Naive thymus-derived CD4-positive, alpha-beta T cell (primary cell): ENCODE measurements at regions of chr20 and their contacts with region 1.

Region 1: GRCh38 chr20:37527638-37528441 is at the start of gene BLCAP:
- DNase-seq: peak; percentile 89 to 98 (median 96)
- ATAC-seq: peak; percentile 96
- H3K4me3 ChIP-seq: peak within 1 kb of the TSS; percentile 86
- H3K4me3 Mint-ChIP-seq: peak within 1 kb of the TSS; percentile 81 to 95 (median 90)
- H3K27ac ChIP-seq: peak within 1 kb of the TSS; percentile 99
- H3K27ac Mint-ChIP-seq: peak within 1 kb of the TSS; percentile 98 to 100 (median 99)
- H3K4me1 ChIP-seq: peaks cover 30 to 35% of the 10 kb centered on the region in 2 donors
- H3K4me1 Mint-ChIP-seq: peaks cover 41 to 52% (median 46%) of the 10 kb centered on the region in 7 donors
- H3K27me3 ChIP-seq: no peaks in the 10 kb centered on the region
- H3K27me3 Mint-ChIP-seq: peaks cover 0 to 2% (median 0%) of the 10 kb centered on the region in 5 donors
- total RNA-seq, gene BLCAP: 42.1 to 94.7 (median 73.4) TPM

Region 2: GRCh38 chr20:37142708-37143107 is 385.1 kb before region 1 on chr20:
- CTCF ChIA-PET with region 1: no interaction called
- POLR2A ChIA-PET with region 1: no interaction called
- intact Hi-C with region 1: no loop called
- DNase-seq: no peak
- ATAC-seq: no peak
- H3K4me3 ChIP-seq: no peak overlapping the region
- H3K4me3 Mint-ChIP-seq: no peak overlapping the region
- H3K27ac ChIP-seq: no peak overlapping the region
- H3K27ac Mint-ChIP-seq: no peak overlapping the region
- H3K4me1 ChIP-seq: no peaks in the 10 kb centered on the region
- H3K4me1 Mint-ChIP-seq: no peaks in the 10 kb centered on the region
- H3K27me3 ChIP-seq: no peaks in the 10 kb centered on the region
- H3K27me3 Mint-ChIP-seq: peaks cover 0 to 5% (median 0%) of the 10 kb centered on the region in 5 donors

Region 3: GRCh38 chr20:37192137-37192854 is 335.5 kb before region 1 on chr20:
- CTCF ChIA-PET with region 1: interaction called, 42 read pairs
- POLR2A ChIA-PET with region 1: interaction called, 8 read pairs
- intact Hi-C with region 1: loop called in 1 of 2 experiments (anchors 2 kb)
- DNase-seq: peak; percentile 31 to 71 (median 60)
- ATAC-seq: peak; percentile 89
- H3K4me3 ChIP-seq: no peak overlapping the region
- H3K4me3 Mint-ChIP-seq: peak overlapping the region in 3 of 10 donors; percentile 7 to 44 (median 13)
- H3K27ac ChIP-seq: no peak overlapping the region
- H3K27ac Mint-ChIP-seq: peak overlapping the region in 8 of 9 donors; percentile 36 to 94 (median 66)
- H3K4me1 ChIP-seq: peaks cover 36 to 46% of the 10 kb centered on the region in 2 donors
- H3K4me1 Mint-ChIP-seq: peaks cover 64 to 84% (median 80%) of the 10 kb centered on the region in 7 donors
- H3K27me3 ChIP-seq: no peaks in the 10 kb centered on the region
- H3K27me3 Mint-ChIP-seq: no peaks in the 10 kb centered on the region

Region 4: DNA sequence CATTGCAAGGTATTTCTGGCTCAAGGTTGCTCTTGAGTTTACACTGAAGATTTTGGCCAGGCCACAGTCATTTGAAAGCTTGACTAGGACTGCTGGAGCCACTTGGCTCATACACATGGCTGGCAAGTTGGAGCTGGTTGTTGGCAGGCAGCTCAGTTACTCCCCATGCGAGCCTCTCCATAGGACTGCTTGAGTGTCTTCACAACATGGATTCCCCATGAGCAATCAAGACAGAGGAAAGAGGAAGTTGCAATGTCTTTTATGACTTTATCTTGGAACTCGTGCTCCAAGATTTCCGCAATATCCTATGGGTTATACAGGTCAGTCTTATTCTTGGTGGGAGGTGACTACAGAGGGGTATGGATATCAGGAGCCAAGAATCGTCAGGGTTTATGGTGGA is 239.7 kb before region 1 on chr20:
- CTCF ChIA-PET with region 1: interaction called, 3 read pairs
- POLR2A ChIA-PET with region 1: interaction called, 11 read pairs
- intact Hi-C with region 1: loop called (anchors 1 kb)
- DNase-seq: no peak
- ATAC-seq: no peak
- H3K4me3 ChIP-seq: no peak overlapping the region
- H3K4me3 Mint-ChIP-seq: peak overlapping the region; percentile 8 to 90 (median 64)
- H3K27ac ChIP-seq: no peak overlapping the region
- H3K27ac Mint-ChIP-seq: peak overlapping the region in 3 of 9 donors; percentile 10 to 96 (median 87)
- H3K4me1 ChIP-seq: peaks cover 10 to 13% of the 10 kb centered on the region in 2 donors
- H3K4me1 Mint-ChIP-seq: peaks cover 15 to 30% (median 24%) of the 10 kb centered on the region in 7 donors
- H3K27me3 ChIP-seq: no peaks in the 10 kb centered on the region
- H3K27me3 Mint-ChIP-seq: peaks cover 0 to 10% (median 6%) of the 10 kb centered on the region in 5 donors

Region 5: GRCh38 chr20:37294262-37294981 is 233.4 kb before region 1 on chr20:
- CTCF ChIA-PET with region 1: interaction called, 3 read pairs
- POLR2A ChIA-PET with region 1: interaction called, 11 read pairs
- intact Hi-C with region 1: loop called (anchors 1 kb)
- DNase-seq: no peak
- ATAC-seq: peak; percentile 52
- H3K4me3 ChIP-seq: no peak overlapping the region
- H3K4me3 Mint-ChIP-seq: peak overlapping the region in 1 of 10 donors; percentile 3
- H3K27ac ChIP-seq: no peak overlapping the region
- H3K27ac Mint-ChIP-seq: peak overlapping the region in 1 of 9 donors; percentile 39
- H3K4me1 ChIP-seq: peaks cover 13 to 14% of the 10 kb centered on the region in 2 donors
- H3K4me1 Mint-ChIP-seq: peaks cover 34 to 69% (median 62%) of the 10 kb centered on the region in 7 donors
- H3K27me3 ChIP-seq: no peaks in the 10 kb centered on the region
- H3K27me3 Mint-ChIP-seq: no peaks in the 10 kb centered on the region

Region 6: GRCh38 chr20:37384683-37385174 is 143.1 kb before region 1 on chr20:
- CTCF ChIA-PET with region 1: interaction called, 4 read pairs
- POLR2A ChIA-PET with region 1: interaction called, 3 read pairs
- intact Hi-C with region 1: loop called (anchors 2 to 5 kb)
- DNase-seq: peak; percentile 55 to 89 (median 77)
- ATAC-seq: peak; percentile 96
- H3K4me3 ChIP-seq: peak overlapping the region; percentile 28
- H3K4me3 Mint-ChIP-seq: peak overlapping the region; percentile 75 to 94 (median 84)
- H3K27ac ChIP-seq: peak overlapping the region; percentile 8
- H3K27ac Mint-ChIP-seq: peak overlapping the region in 6 of 9 donors; percentile 8 to 85 (median 56)
- H3K4me1 ChIP-seq: peaks cover 4 to 5% of the 10 kb centered on the region in 2 donors
- H3K4me1 Mint-ChIP-seq: peaks cover 4 to 13% (median 6%) of the 10 kb centered on the region in 7 donors
- H3K27me3 ChIP-seq: no peaks in the 10 kb centered on the region
- H3K27me3 Mint-ChIP-seq: peaks cover 0 to 7% (median 0%) of the 10 kb centered on the region in 5 donors

Region 7: DNA sequence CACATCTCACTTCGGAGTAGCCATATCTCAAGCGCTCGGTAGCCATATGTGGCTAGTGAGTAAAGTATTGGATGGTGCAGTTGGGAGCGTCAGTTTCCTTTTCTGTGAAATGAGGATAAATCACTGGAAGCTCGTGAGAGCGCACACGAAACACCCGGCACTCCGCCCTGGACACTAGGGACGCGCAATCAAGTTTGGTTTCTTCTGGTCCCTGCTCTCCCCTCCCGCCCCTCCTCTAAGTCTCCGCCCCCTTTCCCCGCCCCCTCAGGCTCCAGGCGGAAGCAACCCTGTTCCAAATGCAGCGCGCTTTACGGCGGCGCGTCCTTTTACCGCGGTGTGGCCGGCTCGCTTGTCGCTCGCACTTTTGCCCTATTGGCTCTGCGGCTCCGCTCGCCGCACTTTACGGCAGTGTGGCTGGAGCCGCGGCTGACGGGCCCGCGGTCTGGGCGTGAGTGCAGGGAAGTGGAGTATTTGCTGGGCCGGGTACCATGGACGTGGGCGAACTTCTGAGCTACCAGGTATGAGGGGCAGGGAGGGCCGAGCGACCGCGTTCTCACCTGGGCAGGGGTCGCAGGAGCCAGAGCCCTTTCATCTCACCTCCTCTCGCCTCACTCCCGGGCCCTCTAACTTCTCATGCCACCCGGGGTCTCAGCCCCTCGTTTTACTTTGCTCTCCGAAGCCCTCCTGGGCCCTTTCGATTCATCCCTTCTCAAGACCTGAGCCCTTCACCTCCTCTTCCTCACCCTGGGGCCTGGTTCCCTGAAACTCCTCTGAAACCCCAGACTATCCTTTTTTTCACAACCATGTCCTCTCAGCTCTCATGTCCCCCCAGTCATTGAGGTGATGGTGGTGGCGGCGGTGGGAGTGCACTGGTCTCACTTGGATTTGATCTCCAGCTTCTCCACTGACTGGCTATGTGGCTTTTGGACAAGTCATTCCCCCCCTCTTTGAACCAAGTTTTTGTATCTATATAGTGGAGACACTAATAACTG is 166.1 kb after region 1 on chr20 and contains the start of gene CTNNBL1:
- CTCF ChIA-PET with region 1: no interaction called
- POLR2A ChIA-PET with region 1: no interaction called
- intact Hi-C with region 1: loop called (anchors 1 to 5 kb)
- DNase-seq: peak; percentile 83 to 94 (median 93)
- ATAC-seq: peak; percentile 99
- H3K4me3 ChIP-seq: peak within 1 kb of the TSS; percentile 80
- H3K4me3 Mint-ChIP-seq: peak within 1 kb of the TSS; percentile 96 to 100 (median 99)
- H3K27ac ChIP-seq: peak within 1 kb of the TSS; percentile 76
- H3K27ac Mint-ChIP-seq: peak within 1 kb of the TSS; percentile 87 to 96 (median 93)
- H3K4me1 ChIP-seq: peaks cover 9 to 20% of the 10 kb centered on the region in 2 donors
- H3K4me1 Mint-ChIP-seq: peaks cover 19 to 53% (median 42%) of the 10 kb centered on the region in 7 donors
- H3K27me3 ChIP-seq: no peaks in the 10 kb centered on the region
- H3K27me3 Mint-ChIP-seq: peaks cover 12 to 22% (median 16%) of the 10 kb centered on the region in 5 donors
- total RNA-seq, gene CTNNBL1: 41.7 to 72.9 (median 49.1) TPM

Region 8: DNA sequence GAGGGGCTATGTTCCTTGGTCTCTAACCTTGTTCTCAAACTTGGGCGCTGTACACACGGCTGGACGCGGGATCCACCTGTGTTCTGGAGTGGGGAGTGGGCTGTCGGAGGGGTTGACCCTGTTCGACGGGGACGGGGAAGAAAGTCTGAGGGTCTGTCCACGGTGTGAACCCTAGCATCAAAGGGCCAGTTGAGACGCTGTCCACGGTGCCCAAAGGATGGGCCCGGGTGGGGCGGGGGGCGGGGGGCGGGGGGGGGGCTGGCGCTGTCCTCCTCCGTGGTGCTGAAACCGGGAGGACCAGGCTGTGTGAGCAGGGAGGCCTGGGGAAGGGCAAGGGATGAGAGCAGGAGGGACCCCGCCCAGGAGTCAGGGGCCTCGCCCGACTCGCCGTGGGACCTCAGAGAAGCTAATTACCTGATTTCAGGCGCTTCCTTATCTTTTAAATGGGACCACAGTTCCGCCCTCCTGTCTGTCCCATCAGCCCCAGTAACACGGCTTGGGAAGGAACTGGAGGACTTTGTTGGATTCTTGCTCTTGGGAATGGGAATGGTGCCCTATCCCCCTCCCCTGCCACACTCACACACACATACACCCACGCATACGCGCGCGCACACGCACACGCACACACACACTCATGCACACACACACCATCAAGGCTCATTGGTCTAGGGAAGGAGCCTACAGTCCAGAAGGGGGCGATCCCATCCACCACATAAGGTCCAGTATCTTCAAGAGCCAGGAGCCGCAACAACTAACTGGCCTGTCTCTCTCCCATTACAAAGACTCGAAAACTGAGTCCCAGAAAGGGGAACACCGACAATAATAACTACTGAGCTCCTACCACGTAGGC is 374.0 kb after region 1 on chr20:
- CTCF ChIA-PET with region 1: no interaction called
- POLR2A ChIA-PET with region 1: no interaction called
- intact Hi-C with region 1: no loop called
- DNase-seq: no peak
- ATAC-seq: peak; percentile 48
- H3K4me3 ChIP-seq: no peak overlapping the region
- H3K4me3 Mint-ChIP-seq: peak overlapping the region in 7 of 10 donors; percentile 23 to 64 (median 32)
- H3K27ac ChIP-seq: no peak overlapping the region
- H3K27ac Mint-ChIP-seq: peak overlapping the region in 1 of 9 donors; percentile 8
- H3K4me1 ChIP-seq: no peaks in the 10 kb centered on the region
- H3K4me1 Mint-ChIP-seq: peaks cover 6 to 18% (median 11%) of the 10 kb centered on the region in 7 donors
- H3K27me3 ChIP-seq: peaks cover 0 to 5% of the 10 kb centered on the region in 2 donors
- H3K27me3 Mint-ChIP-seq: peaks cover 55 to 69% (median 64%) of the 10 kb centered on the region in 5 donors